Naive thymus-derived CD4-positive, alpha-beta T cell (primary cell): ENCODE measurements at regions of chr2 and their contacts with region 1.

Region 1: DNA sequence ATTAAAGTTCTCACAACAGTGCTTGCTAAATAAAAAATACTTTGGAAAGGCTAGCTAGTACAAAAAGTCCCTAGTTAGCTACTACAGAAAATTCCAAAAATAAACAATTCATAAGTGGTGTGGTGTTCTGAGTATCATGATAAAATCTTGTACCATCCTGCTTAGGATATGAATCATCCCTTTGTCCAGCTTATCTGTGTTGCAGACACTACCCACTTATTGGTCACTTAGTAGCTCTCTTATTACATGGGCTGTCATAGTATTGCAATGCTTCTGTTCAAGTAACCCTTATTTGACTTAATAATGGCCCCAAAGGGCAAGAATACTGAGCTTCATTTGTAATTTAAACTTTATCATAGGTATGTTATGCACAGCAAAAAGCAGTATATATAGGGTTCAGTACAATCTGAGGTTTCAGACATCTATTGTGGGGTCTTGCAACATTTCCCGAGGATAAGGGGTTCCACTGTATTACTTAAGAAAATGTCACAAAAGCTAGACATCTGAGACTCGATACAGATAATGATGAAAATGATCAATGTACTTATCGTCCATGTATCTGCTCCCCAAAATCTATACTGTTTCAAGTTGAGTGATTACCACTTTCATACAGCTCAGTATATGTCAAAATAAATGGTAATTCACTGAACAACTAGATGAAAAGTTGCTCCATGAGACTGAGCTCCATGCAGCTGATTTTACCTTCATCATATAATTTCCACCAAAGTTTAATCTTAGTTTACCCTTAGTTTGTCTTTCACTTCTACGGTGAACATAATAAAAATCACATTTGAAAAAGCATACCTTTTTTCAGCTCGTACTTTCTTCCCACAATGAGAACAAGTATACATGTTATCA is 93.8 kb downstream of the C2orf74 start:
- DNase-seq: no peak
- ATAC-seq: peak; percentile 45
- H3K4me3 ChIP-seq: no peak overlapping the region
- H3K4me3 Mint-ChIP-seq: no peak overlapping the region
- H3K27ac ChIP-seq: no peak overlapping the region
- H3K27ac Mint-ChIP-seq: no peak overlapping the region
- H3K4me1 ChIP-seq: no peaks in the 10 kb centered on the region
- H3K4me1 Mint-ChIP-seq: peaks cover 0 to 6% (median 3%) of the 10 kb centered on the region in 7 donors
- H3K27me3 ChIP-seq: no peaks in the 10 kb centered on the region
- H3K27me3 Mint-ChIP-seq: no peaks in the 10 kb centered on the region

Region 2: GRCh38 chr2:60818272-60818671 is 437.5 kb before region 1 on chr2:
- CTCF ChIA-PET with region 1: no interaction called
- POLR2A ChIA-PET with region 1: no interaction called
- intact Hi-C with region 1: no loop called
- DNase-seq: peak in 2 of 9 donors; percentile 29 to 53
- ATAC-seq: no peak
- H3K4me3 ChIP-seq: no peak overlapping the region
- H3K4me3 Mint-ChIP-seq: peak overlapping the region in 2 of 10 donors; percentile 5 to 34
- H3K27ac ChIP-seq: no peak overlapping the region
- H3K27ac Mint-ChIP-seq: peak overlapping the region in 7 of 9 donors; percentile 28 to 92 (median 61)
- H3K4me1 ChIP-seq: peaks cover 24% of the 10 kb centered on the region in 2 donors
- H3K4me1 Mint-ChIP-seq: peaks cover 22 to 46% (median 37%) of the 10 kb centered on the region in 7 donors
- H3K27me3 ChIP-seq: no peaks in the 10 kb centered on the region
- H3K27me3 Mint-ChIP-seq: peaks cover 0 to 3% (median 0%) of the 10 kb centered on the region in 5 donors

Region 3: DNA sequence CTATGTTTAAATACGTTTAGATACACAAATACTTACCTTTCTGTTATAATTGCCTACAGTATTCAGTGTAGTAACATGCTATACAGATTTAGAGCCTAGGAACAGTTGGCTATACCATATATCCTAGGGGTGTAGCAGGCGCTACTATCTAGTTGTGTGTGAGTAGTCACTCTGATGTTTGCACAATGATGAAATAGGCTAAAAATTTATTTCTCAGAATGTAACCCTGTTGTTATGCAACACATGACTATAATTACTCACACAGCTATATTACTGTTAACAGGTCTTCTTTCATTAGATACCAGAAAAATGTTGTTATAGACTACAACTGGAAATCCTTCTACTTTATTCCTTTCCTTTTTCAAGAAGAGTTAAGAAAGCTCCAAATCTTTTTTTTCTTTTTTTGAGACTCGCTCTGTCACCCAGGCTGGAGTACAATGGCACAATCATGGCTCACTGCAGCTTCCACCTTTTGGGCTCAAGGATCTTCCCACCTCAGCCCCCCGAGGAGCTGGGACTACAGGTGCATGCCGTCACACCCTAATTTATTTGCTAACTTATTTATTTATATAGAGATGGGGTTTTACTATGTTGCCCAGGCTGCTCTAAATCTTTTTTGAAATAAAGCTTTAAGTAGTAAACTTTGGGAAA is 45.4 kb before region 1 on chr2:
- CTCF ChIA-PET with region 1: no interaction called
- POLR2A ChIA-PET with region 1: no interaction called
- intact Hi-C with region 1: loop called in 1 of 2 experiments (anchors 5 kb)
- DNase-seq: no peak
- ATAC-seq: peak; percentile 37
- H3K4me3 ChIP-seq: no peak overlapping the region
- H3K4me3 Mint-ChIP-seq: no peak overlapping the region
- H3K27ac ChIP-seq: no peak overlapping the region
- H3K27ac Mint-ChIP-seq: peak overlapping the region in 3 of 9 donors; percentile 28 to 52 (median 30)
- H3K4me1 ChIP-seq: no peaks in the 10 kb centered on the region
- H3K4me1 Mint-ChIP-seq: peaks cover 0 to 2% (median 0%) of the 10 kb centered on the region in 7 donors
- H3K27me3 ChIP-seq: no peaks in the 10 kb centered on the region
- H3K27me3 Mint-ChIP-seq: no peaks in the 10 kb centered on the region